ENCODE measurements at regions of chr6 and their contacts with region 1.

Region 1: GRCh38 chr6:73980096-73980495 is 284.1 kb downstream of the CD109 start:
- DNase-seq: no peak
- ATAC-seq: no peak
- H3K4me3 ChIP-seq: no peak overlapping the region
- H3K27ac ChIP-seq: no peak overlapping the region
- H3K4me1 ChIP-seq: no peaks in the 10 kb centered on the region
- H3K27me3 ChIP-seq: no peaks in the 10 kb centered on the region
- CTCF ChIP-seq: no peak

Region 2: GRCh38 chr6:74018825-74019224 is 38.7 kb after region 1 on chr6:
- CTCF ChIA-PET with region 1: no interaction called
- POLR2A ChIA-PET with region 1: no interaction called
- in situ Hi-C with region 1: no loop called
- intact Hi-C with region 1: no loop called
- DNase-seq: no peak
- ATAC-seq: no peak
- H3K4me3 ChIP-seq: no peak overlapping the region
- H3K27ac ChIP-seq: no peak overlapping the region
- H3K4me1 ChIP-seq: no peaks in the 10 kb centered on the region
- H3K27me3 ChIP-seq: no peaks in the 10 kb centered on the region
- CTCF ChIP-seq: no peak

Region 3: DNA sequence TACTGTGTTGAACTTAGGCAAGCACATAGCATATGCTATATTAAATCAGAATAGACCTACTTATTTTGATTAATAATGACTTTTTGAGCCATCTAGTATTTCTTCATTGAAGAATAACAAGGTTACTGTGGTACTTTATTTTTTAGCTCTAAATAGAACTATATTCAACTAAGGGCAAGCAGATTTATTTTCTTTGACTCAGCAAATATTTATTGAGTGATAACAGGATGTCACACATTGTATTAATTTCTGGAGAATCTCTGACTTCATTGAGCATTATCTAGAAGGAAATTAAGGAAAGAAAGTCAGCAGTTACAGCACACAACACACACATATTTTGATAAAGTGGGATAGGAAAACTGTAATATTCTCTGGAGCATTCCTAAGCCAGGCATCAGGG is 123.3 kb after region 1 on chr6:
- CTCF ChIA-PET with region 1: no interaction called
- POLR2A ChIA-PET with region 1: interaction called, 11 read pairs
- in situ Hi-C with region 1: no loop called
- intact Hi-C with region 1: no loop called
- DNase-seq: no peak
- ATAC-seq: no peak
- H3K4me3 ChIP-seq: no peak overlapping the region
- H3K27ac ChIP-seq: no peak overlapping the region
- H3K4me1 ChIP-seq: no peaks in the 10 kb centered on the region
- H3K27me3 ChIP-seq: no peaks in the 10 kb centered on the region
- CTCF ChIP-seq: no peak

Measured in Panc1 (cell line).